ENCODE measurements at regions of chr5 and their contacts with region 1.

Region 1: DNA sequence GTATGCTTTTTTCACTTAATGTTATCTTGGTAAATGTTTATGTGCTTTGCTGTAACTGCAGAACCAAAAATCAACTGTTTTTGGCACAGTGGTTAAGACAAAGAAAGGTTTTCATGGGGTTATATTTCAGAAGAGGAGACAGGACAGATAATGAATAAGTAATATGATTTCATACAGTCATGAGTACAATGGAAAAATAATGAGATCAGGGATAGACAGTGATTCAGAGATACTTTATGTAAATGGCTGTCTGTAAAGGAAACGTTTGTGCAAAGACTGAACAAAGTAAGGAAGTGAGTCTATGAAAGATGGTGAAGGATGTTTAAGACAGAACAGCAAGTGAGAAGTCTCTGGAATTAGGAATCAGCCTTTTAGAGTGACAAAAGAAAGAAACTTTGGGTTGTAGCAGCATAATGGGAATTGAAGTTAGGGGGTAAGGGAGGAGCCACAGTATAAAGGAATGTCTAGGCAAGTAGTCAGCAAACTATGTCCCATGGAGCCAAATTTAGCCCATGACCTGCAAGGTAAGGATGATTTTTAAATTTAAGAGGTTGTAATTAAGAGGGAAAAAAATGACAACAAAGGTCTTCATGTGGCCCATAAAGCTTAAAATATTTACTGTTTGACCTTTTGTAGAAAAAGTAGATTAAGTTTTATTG is 55.0 kb downstream of the TNPO1 start:
- DNase-seq: no peak
- ATAC-seq: no peak
- H3K4me3 ChIP-seq: no peak overlapping the region
- H3K4me3 Mint-ChIP-seq: no peak overlapping the region
- H3K27ac ChIP-seq: no peak overlapping the region
- H3K27ac Mint-ChIP-seq: peak overlapping the region in 4 of 9 donors; percentile 12 to 49 (median 34)
- H3K4me1 ChIP-seq: no peaks in the 10 kb centered on the region
- H3K4me1 Mint-ChIP-seq: peaks cover 5 to 42% (median 15%) of the 10 kb centered on the region in 7 donors
- H3K27me3 ChIP-seq: no peaks in the 10 kb centered on the region
- H3K27me3 Mint-ChIP-seq: no peaks in the 10 kb centered on the region

Region 2: DNA sequence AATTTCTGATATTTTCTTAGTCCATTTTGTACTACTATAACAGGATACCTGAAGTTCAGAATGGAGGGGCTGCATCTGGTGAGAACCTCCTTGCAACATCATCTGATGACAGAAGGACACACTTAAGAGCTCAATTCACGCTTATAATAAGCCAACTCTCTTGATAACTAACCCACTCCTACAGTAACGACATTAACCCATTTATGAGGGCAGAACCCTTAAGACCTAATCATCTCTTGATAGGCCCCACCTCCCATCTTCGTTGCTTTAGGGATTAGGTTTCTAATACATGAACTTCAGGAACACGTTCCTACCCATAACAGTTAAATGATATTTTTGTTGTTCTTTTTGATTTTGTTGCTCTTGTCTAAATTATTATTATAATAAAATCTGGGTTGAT is 14.3 kb after region 1 on chr5:
- CTCF ChIA-PET with region 1: no interaction called
- POLR2A ChIA-PET with region 1: no interaction called
- intact Hi-C with region 1: loop called in 1 of 2 experiments (anchors 2 kb)
- DNase-seq: no peak
- ATAC-seq: no peak
- H3K4me3 ChIP-seq: no peak overlapping the region
- H3K4me3 Mint-ChIP-seq: no peak overlapping the region
- H3K27ac ChIP-seq: no peak overlapping the region
- H3K27ac Mint-ChIP-seq: peak overlapping the region in 1 of 9 donors; percentile 38
- H3K4me1 ChIP-seq: no peaks in the 10 kb centered on the region
- H3K4me1 Mint-ChIP-seq: peaks cover 3 to 12% (median 10%) of the 10 kb centered on the region in 7 donors
- H3K27me3 ChIP-seq: no peaks in the 10 kb centered on the region
- H3K27me3 Mint-ChIP-seq: no peaks in the 10 kb centered on the region